Dendritic cell treated with granulocyte-macrophage colony-stimulating factor and Interleukin-4, amounts not matched to agents 40 ng/mL and 50 ng/mL, for 4 days (primary cell): ENCODE measurements at regions of chr2 and their contacts with region 1.

Region 1: DNA sequence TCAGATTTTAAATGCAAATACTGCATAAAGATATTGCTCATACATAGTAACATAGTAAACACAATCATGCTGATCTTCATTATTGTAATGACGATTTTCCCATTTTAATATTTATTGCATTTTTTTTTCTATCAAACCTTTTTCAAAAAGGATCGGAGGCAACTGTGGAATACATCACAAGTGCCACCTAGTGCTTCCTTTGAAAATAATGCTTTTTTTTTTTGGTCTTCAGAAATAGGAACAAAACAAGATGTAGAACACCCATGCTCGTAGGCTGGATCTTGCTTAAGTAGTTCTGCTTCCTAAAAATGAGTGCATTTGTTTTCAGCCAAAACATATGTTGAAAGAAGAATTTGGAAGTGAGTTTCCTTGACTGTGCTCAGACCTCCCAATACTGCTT is 35.7 kb upstream of the GPR155 start:
- H3K4me3 Mint-ChIP-seq: no peak overlapping the region
- H3K27ac Mint-ChIP-seq: peak overlapping the region; percentile 79
- H3K4me1 Mint-ChIP-seq: peaks cover 24% of the 10 kb centered on the region
- H3K27me3 Mint-ChIP-seq: peaks cover 9% of the 10 kb centered on the region

Region 2: GRCh38 chr2:174487108-174487819 is 35.3 kb before region 1 on chr2:
- intact Hi-C with region 1: loop called (anchors 5 kb)
- H3K4me3 Mint-ChIP-seq: peak overlapping the region; percentile 91
- H3K27ac Mint-ChIP-seq: peak overlapping the region; percentile 96
- H3K4me1 Mint-ChIP-seq: peaks cover 34% of the 10 kb centered on the region
- H3K27me3 Mint-ChIP-seq: peaks cover 6% of the 10 kb centered on the region